Pancreas (tissue), 10 donors: ENCODE measurements at regions of chr21 and their contacts with region 1.

Region 1: DNA sequence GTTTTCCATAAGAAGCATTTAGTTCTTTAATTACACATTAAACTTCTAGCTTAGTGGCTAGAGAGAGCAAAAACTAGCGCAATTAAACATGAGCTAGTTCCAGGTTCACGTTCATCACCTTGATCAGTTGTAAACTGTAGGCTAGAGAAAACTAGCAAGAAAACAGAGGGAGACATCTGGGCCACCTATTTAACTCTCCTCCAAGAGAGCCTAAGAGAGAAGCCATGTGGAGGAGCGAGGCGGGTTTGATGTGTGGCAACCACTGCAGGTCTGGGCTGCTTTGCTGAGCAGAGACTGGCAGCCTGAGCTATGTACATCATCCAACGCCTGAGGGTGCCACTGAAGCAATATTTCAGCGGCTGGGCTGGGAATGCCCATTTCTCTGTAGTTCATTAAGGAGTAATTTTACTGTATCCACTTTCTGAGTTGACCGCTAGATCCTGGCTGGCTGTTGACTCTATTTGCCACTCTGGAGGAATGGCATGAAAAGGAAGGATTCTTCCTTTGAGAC is 252.9 kb downstream of the DYRK1A start:
- DNase-seq: no peak
- ATAC-seq: no peak
- H3K4me3 ChIP-seq: no peak overlapping the region
- H3K27ac ChIP-seq: no peak overlapping the region
- H3K4me1 ChIP-seq: no peaks in the 10 kb centered on the region
- H3K27me3 ChIP-seq: no peaks in the 10 kb centered on the region
- CTCF ChIP-seq: no peak

Region 2: GRCh38 chr21:37557261-37557950 is 62.1 kb before region 1 on chr21:
- intact Hi-C with region 1: loop called in 1 of 3 experiments (anchors 10 kb)
- DNase-seq: no peak
- ATAC-seq: no peak
- H3K4me3 ChIP-seq: no peak overlapping the region
- H3K27ac ChIP-seq: no peak overlapping the region
- H3K4me1 ChIP-seq: no peaks in the 10 kb centered on the region
- H3K27me3 ChIP-seq: no peaks in the 10 kb centered on the region
- CTCF ChIP-seq: no peak